Sigmoid colon (tissue), 7 donors: ENCODE measurements at regions of chr15 and their contacts with region 1.

Region 1: GRCh38 chr15:74438721-74439316 is 5.1 kb upstream of the SEMA7A start:
- DNase-seq: peak; percentile 78
- H3K4me3 ChIP-seq: no peak overlapping the region
- H3K27ac ChIP-seq: no peak overlapping the region
- H3K4me1 ChIP-seq: peaks cover 0 to 9% (median 6%) of the 10 kb centered on the region in 4 donors
- H3K27me3 ChIP-seq: peaks cover 0 to 3% (median 0%) of the 10 kb centered on the region in 3 donors
- CTCF ChIP-seq: peak; percentile 49 to 87 (median 65)
- EP300 ChIP-seq: no peak
- POLR2A ChIP-seq: no peak

Region 2: GRCh38 chr15:74382004-74382816 is 56.6 kb before region 1 on chr15:
- intact Hi-C with region 1: loop called (anchors 2 kb)
- DNase-seq: peak; percentile 86
- H3K4me3 ChIP-seq: no peak overlapping the region
- H3K27ac ChIP-seq: no peak overlapping the region
- H3K4me1 ChIP-seq: no peaks in the 10 kb centered on the region
- H3K27me3 ChIP-seq: peaks cover 0 to 8% (median 0%) of the 10 kb centered on the region in 3 donors
- CTCF ChIP-seq: peak; percentile 27 to 75 (median 72)
- EP300 ChIP-seq: no peak
- POLR2A ChIP-seq: no peak